Activated CD4-positive, alpha-beta memory T cell treated with anti-CD3 and anti-CD28 coated beads for 36 hours (primary cell): ENCODE measurements at regions of chr10 and their contacts with region 1.

Region 1: GRCh38 chr10:31031558-31032257 is at the start of gene ZNF438:
- DNase-seq: peak; percentile 96
- H3K4me3 Mint-ChIP-seq: peak within 1 kb of the TSS; percentile 86
- H3K27ac Mint-ChIP-seq: peak within 1 kb of the TSS; percentile 96
- H3K4me1 Mint-ChIP-seq: peaks cover 13% of the 10 kb centered on the region
- H3K27me3 Mint-ChIP-seq: no peaks in the 10 kb centered on the region
- total RNA-seq, gene ZNF438: 3.7 TPM

Region 2: DNA sequence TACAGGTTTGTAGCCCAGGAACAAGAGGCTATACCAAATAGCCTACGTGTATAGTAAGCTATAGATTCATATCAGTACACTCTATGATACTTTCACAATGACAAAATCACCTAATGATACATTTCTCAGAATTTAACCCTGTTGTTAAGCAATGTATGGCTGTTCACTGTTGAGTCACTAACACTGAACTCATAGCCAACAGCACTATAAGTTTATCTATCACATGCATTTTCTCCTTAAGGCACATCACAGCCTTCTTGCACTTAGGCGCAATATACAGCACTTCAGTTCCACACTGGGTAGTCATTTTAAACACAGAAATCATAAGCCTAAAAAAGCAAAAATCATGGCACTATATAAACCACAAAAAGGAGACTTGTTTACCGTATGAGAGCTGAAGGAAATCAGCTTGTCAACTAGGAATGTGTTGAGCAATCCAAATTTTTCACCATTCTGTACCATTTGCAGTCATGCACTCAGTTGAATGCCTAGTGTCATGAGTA is 45.6 kb before region 1 on chr10:
- CTCF ChIA-PET with region 1: interaction called, 4 read pairs
- POLR2A ChIA-PET with region 1: interaction called, 3 read pairs
- intact Hi-C with region 1: loop called (anchors 1 kb)
- DNase-seq: no peak
- H3K4me3 Mint-ChIP-seq: no peak overlapping the region
- H3K27ac Mint-ChIP-seq: peak overlapping the region; percentile 76
- H3K4me1 Mint-ChIP-seq: peaks cover 15% of the 10 kb centered on the region
- H3K27me3 Mint-ChIP-seq: no peaks in the 10 kb centered on the region

Region 3: GRCh38 chr10:31042670-31043069 is 11.0 kb after region 1 on chr10:
- CTCF ChIA-PET with region 1: no interaction called
- POLR2A ChIA-PET with region 1: no interaction called
- intact Hi-C with region 1: no loop called
- DNase-seq: no peak
- H3K4me3 Mint-ChIP-seq: no peak overlapping the region
- H3K27ac Mint-ChIP-seq: no peak overlapping the region
- H3K4me1 Mint-ChIP-seq: peaks cover 2% of the 10 kb centered on the region
- H3K27me3 Mint-ChIP-seq: peaks cover 7% of the 10 kb centered on the region

Region 4: GRCh38 chr10:31101123-31101522 is 69.4 kb after region 1 on chr10:
- CTCF ChIA-PET with region 1: no interaction called
- POLR2A ChIA-PET with region 1: interaction called, 6 read pairs
- intact Hi-C with region 1: loop called (anchors 2 kb)
- DNase-seq: peak; percentile 89
- H3K4me3 Mint-ChIP-seq: peak overlapping the region; percentile 8
- H3K27ac Mint-ChIP-seq: peak overlapping the region; percentile 92
- H3K4me1 Mint-ChIP-seq: peaks cover 48% of the 10 kb centered on the region
- H3K27me3 Mint-ChIP-seq: no peaks in the 10 kb centered on the region

Region 5: GRCh38 chr10:31340343-31340742 is 308.6 kb after region 1 on chr10:
- CTCF ChIA-PET with region 1: interaction called, 5 read pairs
- POLR2A ChIA-PET with region 1: no interaction called
- intact Hi-C with region 1: loop called (anchors 5 kb)
- DNase-seq: peak; percentile 38
- H3K4me3 Mint-ChIP-seq: no peak overlapping the region
- H3K27ac Mint-ChIP-seq: no peak overlapping the region
- H3K4me1 Mint-ChIP-seq: peaks cover 24% of the 10 kb centered on the region
- H3K27me3 Mint-ChIP-seq: no peaks in the 10 kb centered on the region

Region 6: GRCh38 chr10:31707093-31708039 is 675.7 kb after region 1 on chr10:
- CTCF ChIA-PET with region 1: no interaction called
- POLR2A ChIA-PET with region 1: no interaction called
- intact Hi-C with region 1: loop called (anchors 5 kb)
- DNase-seq: peak; percentile 81
- H3K4me3 Mint-ChIP-seq: peak overlapping the region; percentile 23
- H3K27ac Mint-ChIP-seq: peak overlapping the region; percentile 84
- H3K4me1 Mint-ChIP-seq: peaks cover 24% of the 10 kb centered on the region
- H3K27me3 Mint-ChIP-seq: no peaks in the 10 kb centered on the region